ENCODE measurements at regions of chr11 and their contacts with region 1.

Region 1: GRCh38 chr11:128522055-128522942 is 65.1 kb downstream of the ETS1 start:
- DNase-seq: peak; percentile 97
- ATAC-seq: peak; percentile 93
- H3K4me3 ChIP-seq: peak overlapping the region; percentile 82 to 93
- H3K27ac ChIP-seq: peak overlapping the region; percentile 94
- H3K4me1 ChIP-seq: peaks cover 41% of the 10 kb centered on the region
- H3K27me3 ChIP-seq: no peaks in the 10 kb centered on the region
- CTCF ChIP-seq: no peak

Region 2: GRCh38 chr11:127506126-127506525 is 1016.2 kb before region 1 on chr11:
- CTCF ChIA-PET with region 1: no interaction called
- POLR2A ChIA-PET with region 1: no interaction called
- in situ Hi-C with region 1: no loop called
- intact Hi-C with region 1: no loop called
- DNase-seq: no peak
- ATAC-seq: no peak
- H3K4me3 ChIP-seq: no peak overlapping the region
- H3K27ac ChIP-seq: no peak overlapping the region
- H3K4me1 ChIP-seq: no peaks in the 10 kb centered on the region
- H3K27me3 ChIP-seq: no peaks in the 10 kb centered on the region
- CTCF ChIP-seq: no peak

Region 3: DNA sequence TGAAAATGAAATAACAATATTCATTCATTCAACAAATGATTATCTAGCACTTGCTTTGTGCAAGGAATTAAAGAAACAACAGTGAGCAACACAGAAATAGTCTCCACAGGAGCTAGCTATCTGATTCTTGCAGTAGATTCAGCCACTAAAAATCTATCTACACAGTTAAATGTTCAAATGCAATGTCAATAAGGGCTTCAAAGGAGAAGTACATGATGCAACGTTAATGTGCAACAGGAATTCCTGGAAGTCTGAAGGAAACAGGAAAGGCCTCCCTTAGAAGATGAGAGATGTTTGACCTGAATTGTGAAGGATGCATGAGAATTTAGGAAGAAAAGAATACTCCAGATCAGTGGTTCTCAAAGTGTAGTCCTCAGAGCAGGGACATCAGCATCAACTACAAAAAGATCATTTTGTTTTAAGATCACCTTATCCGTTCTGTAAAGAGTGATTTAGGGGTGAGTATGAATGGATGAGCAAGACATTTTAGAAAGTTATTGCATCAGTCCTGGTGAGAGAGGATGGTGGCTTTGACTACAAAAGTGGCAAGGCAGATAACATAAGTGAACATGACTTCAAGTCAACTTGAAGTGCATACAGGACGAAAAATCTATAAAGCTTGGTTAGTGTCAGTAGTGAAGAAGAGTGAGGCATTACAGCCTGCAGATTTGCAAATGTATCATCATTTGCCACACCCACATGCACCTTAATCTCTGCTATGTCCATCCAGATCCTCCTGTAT is 30.9 kb before region 1 on chr11:
- CTCF ChIA-PET with region 1: no interaction called
- POLR2A ChIA-PET with region 1: interaction called, 15 read pairs
- in situ Hi-C with region 1: no loop called
- intact Hi-C with region 1: no loop called
- DNase-seq: no peak
- ATAC-seq: no peak
- H3K4me3 ChIP-seq: no peak overlapping the region
- H3K27ac ChIP-seq: peak overlapping the region; percentile 96
- H3K4me1 ChIP-seq: peaks cover 56% of the 10 kb centered on the region
- H3K27me3 ChIP-seq: no peaks in the 10 kb centered on the region
- CTCF ChIP-seq: no peak

Region 4: GRCh38 chr11:128552783-128553661 is 30.7 kb after region 1 on chr11:
- CTCF ChIA-PET with region 1: no interaction called
- POLR2A ChIA-PET with region 1: interaction called, 10 read pairs
- in situ Hi-C with region 1: no loop called
- intact Hi-C with region 1: no loop called
- DNase-seq: no peak
- ATAC-seq: no peak
- H3K4me3 ChIP-seq: no peak overlapping the region
- H3K27ac ChIP-seq: no peak overlapping the region
- H3K4me1 ChIP-seq: no peaks in the 10 kb centered on the region
- H3K27me3 ChIP-seq: no peaks in the 10 kb centered on the region
- CTCF ChIP-seq: no peak

Region 5: GRCh38 chr11:128630367-128631230 is 108.3 kb after region 1 on chr11:
- CTCF ChIA-PET with region 1: interaction called, 3 read pairs
- POLR2A ChIA-PET with region 1: no interaction called
- in situ Hi-C with region 1: no loop called
- intact Hi-C with region 1: loop called (anchors 5 kb)
- DNase-seq: peak; percentile 75
- ATAC-seq: peak; percentile 94
- H3K4me3 ChIP-seq: no peak overlapping the region
- H3K27ac ChIP-seq: no peak overlapping the region
- H3K4me1 ChIP-seq: no peaks in the 10 kb centered on the region
- H3K27me3 ChIP-seq: no peaks in the 10 kb centered on the region
- CTCF ChIP-seq: peak; percentile 91

Measured in Panc1 (cell line).